CD4-positive, alpha-beta memory T cell (primary cell): ENCODE measurements at regions of chr13 and their contacts with region 1.

Region 1: DNA sequence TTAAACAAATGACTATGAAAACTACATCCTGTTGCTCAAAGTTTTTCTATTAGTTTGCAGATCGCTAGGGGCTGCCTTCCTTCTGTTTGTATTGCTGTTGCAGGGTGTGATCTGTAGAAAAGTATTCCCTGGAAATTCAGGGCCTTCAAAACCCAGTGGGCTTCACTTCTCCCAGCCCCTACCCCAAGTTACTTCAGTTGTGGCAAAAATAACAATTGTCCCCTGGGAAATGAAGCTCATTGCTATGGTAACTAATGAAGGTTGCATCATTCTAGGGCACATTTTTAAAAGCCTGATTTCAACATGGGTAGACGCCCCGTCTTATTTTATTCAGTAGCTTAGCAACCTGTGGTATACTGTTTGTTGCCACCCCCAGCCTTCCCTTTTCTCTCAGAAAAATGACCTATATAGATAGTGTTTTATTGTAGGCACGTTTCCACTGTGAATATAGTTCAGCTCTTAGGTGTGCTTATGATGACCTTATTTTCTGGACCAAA is 60.9 kb downstream of the WDFY2 start:
- DNase-seq: peak; percentile 79 to 88 (median 81)
- H3K4me3 ChIP-seq: no peak overlapping the region
- H3K4me3 Mint-ChIP-seq: peak overlapping the region; percentile 43 to 89 (median 84)
- H3K27ac ChIP-seq: peak overlapping the region; percentile 74
- H3K27ac Mint-ChIP-seq: peak overlapping the region; percentile 97 to 100 (median 98)
- H3K4me1 ChIP-seq: peaks cover 51% of the 10 kb centered on the region
- H3K4me1 Mint-ChIP-seq: peaks cover 47 to 60% (median 50%) of the 10 kb centered on the region in 4 donors
- H3K27me3 ChIP-seq: no peaks in the 10 kb centered on the region
- H3K27me3 Mint-ChIP-seq: no peaks in the 10 kb centered on the region

Region 2: GRCh38 chr13:51093574-51093973 is 551.6 kb before region 1 on chr13:
- CTCF ChIA-PET with region 1: no interaction called
- POLR2A ChIA-PET with region 1: no interaction called
- intact Hi-C with region 1: no loop called
- DNase-seq: no peak
- H3K4me3 ChIP-seq: no peak overlapping the region
- H3K4me3 Mint-ChIP-seq: no peak overlapping the region
- H3K27ac ChIP-seq: no peak overlapping the region
- H3K27ac Mint-ChIP-seq: no peak overlapping the region
- H3K4me1 ChIP-seq: no peaks in the 10 kb centered on the region
- H3K4me1 Mint-ChIP-seq: no peaks in the 10 kb centered on the region
- H3K27me3 ChIP-seq: no peaks in the 10 kb centered on the region
- H3K27me3 Mint-ChIP-seq: peaks cover 0 to 8% of the 10 kb centered on the region in 2 donors

Region 3: GRCh38 chr13:51614350-51614786 is 30.8 kb before region 1 on chr13:
- CTCF ChIA-PET with region 1: interaction called, 5 read pairs
- POLR2A ChIA-PET with region 1: interaction called, 30 read pairs
- intact Hi-C with region 1: no loop called
- DNase-seq: peak; percentile 49 to 60 (median 56)
- H3K4me3 ChIP-seq: peak overlapping the region; percentile 39 to 42
- H3K4me3 Mint-ChIP-seq: peak overlapping the region; percentile 43 to 93 (median 90)
- H3K27ac ChIP-seq: peak overlapping the region; percentile 51
- H3K27ac Mint-ChIP-seq: peak overlapping the region; percentile 68 to 99 (median 95)
- H3K4me1 ChIP-seq: peaks cover 11% of the 10 kb centered on the region
- H3K4me1 Mint-ChIP-seq: peaks cover 10 to 34% (median 17%) of the 10 kb centered on the region in 4 donors
- H3K27me3 ChIP-seq: no peaks in the 10 kb centered on the region
- H3K27me3 Mint-ChIP-seq: no peaks in the 10 kb centered on the region

Region 4: DNA sequence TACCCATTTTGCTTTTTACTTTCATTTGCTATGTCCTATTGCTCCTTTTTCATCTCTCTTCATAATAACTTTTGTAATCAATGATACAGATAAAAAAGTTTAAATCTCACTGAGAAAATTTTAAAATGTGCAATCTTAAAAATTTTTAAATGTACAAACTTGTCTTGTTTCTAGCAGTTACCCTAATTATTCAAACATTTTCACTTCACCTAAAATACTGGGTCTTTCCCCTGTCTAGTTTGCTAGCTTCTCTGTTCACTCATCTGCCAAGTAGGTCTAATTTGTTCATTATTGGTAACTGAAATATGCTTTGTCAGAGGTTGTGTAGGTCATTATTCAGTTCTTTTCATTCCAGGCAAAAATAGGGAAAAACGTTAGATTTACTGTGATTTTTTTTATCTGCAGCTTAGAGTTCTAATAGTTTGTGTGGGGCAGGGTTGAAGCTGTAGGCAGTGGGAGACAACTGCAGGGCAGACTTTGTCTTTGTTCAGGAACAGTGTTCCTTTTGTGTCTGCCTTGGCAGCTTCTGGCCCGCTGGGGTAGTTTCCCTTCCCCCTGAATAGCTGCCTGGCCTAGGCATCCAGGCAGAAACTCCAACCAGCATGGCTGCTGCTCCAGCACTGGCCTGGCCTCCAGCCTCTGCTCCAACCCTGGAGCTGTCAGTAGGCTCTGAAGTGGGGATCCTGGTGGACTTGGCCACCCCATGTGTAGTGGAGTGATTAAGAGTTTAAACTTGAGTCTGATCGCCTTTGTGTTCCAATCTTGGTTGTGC is 12.4 kb before region 1 on chr13:
- CTCF ChIA-PET with region 1: interaction called, 3 read pairs
- POLR2A ChIA-PET with region 1: interaction called, 10 read pairs
- intact Hi-C with region 1: no loop called
- DNase-seq: no peak
- H3K4me3 ChIP-seq: no peak overlapping the region
- H3K4me3 Mint-ChIP-seq: peak overlapping the region in 3 of 8 donors; percentile 4 to 43 (median 16)
- H3K27ac ChIP-seq: no peak overlapping the region
- H3K27ac Mint-ChIP-seq: peak overlapping the region in 4 of 7 donors; percentile 9 to 65 (median 60)
- H3K4me1 ChIP-seq: peaks cover 26% of the 10 kb centered on the region
- H3K4me1 Mint-ChIP-seq: peaks cover 46 to 72% (median 52%) of the 10 kb centered on the region in 4 donors
- H3K27me3 ChIP-seq: no peaks in the 10 kb centered on the region
- H3K27me3 Mint-ChIP-seq: no peaks in the 10 kb centered on the region

Region 5: GRCh38 chr13:51959773-51960172 is 314.6 kb after region 1 on chr13:
- CTCF ChIA-PET with region 1: no interaction called
- POLR2A ChIA-PET with region 1: no interaction called
- intact Hi-C with region 1: no loop called
- DNase-seq: no peak
- H3K4me3 ChIP-seq: no peak overlapping the region
- H3K4me3 Mint-ChIP-seq: no peak overlapping the region
- H3K27ac ChIP-seq: no peak overlapping the region
- H3K27ac Mint-ChIP-seq: no peak overlapping the region
- H3K4me1 ChIP-seq: peaks cover 10% of the 10 kb centered on the region
- H3K4me1 Mint-ChIP-seq: peaks cover 6 to 13% (median 9%) of the 10 kb centered on the region in 4 donors
- H3K27me3 ChIP-seq: no peaks in the 10 kb centered on the region
- H3K27me3 Mint-ChIP-seq: peaks cover 0 to 1% of the 10 kb centered on the region in 2 donors